Activated CD4-positive, alpha-beta T cell treated with anti-CD3 and anti-CD28 coated beads for 36 hours (primary cell): ENCODE measurements at regions of chr14 and their contacts with region 1.

Region 1: GRCh38 chr14:73825551-73826188 is 26.0 kb upstream of the PTGR2 start:
- DNase-seq: peak; percentile 91
- ATAC-seq: peak; percentile 79
- H3K4me3 Mint-ChIP-seq: no peak overlapping the region
- H3K27ac Mint-ChIP-seq: no peak overlapping the region
- H3K4me1 Mint-ChIP-seq: peaks cover 18% of the 10 kb centered on the region
- H3K27me3 Mint-ChIP-seq: no peaks in the 10 kb centered on the region

Region 2: DNA sequence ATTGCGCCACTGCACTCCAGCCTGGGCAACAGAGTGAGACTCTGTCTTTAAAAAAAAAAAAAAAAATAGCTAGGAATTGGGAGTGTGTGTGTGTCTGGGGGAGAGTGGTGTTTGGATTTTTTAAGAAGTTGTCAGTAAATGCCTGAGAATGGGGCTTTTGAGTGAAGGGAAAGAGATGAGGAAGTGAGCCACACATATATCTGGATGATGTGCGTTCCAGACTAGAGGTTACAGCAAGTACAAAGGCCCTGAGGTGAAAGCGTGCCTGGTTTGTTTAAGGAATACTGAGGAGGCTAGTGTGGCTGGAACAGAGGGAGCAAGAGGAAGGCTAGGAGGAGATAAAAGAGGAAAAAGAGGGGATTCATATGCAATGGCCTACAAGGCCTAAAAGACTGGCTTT is 518.4 kb before region 1 on chr14:
- CTCF ChIA-PET with region 1: no interaction called
- POLR2A ChIA-PET with region 1: no interaction called
- intact Hi-C with region 1: no loop called
- DNase-seq: no peak
- ATAC-seq: no peak
- H3K4me3 Mint-ChIP-seq: no peak overlapping the region
- H3K27ac Mint-ChIP-seq: no peak overlapping the region
- H3K4me1 Mint-ChIP-seq: peaks cover 8% of the 10 kb centered on the region
- H3K27me3 Mint-ChIP-seq: no peaks in the 10 kb centered on the region

Region 3: GRCh38 chr14:73503648-73504047 is 322.0 kb before region 1 on chr14:
- CTCF ChIA-PET with region 1: no interaction called
- POLR2A ChIA-PET with region 1: no interaction called
- intact Hi-C with region 1: loop called in 1 of 2 experiments (anchors 5 kb)
- DNase-seq: no peak
- ATAC-seq: no peak
- H3K4me3 Mint-ChIP-seq: no peak overlapping the region
- H3K27ac Mint-ChIP-seq: no peak overlapping the region
- H3K4me1 Mint-ChIP-seq: no peaks in the 10 kb centered on the region
- H3K27me3 Mint-ChIP-seq: no peaks in the 10 kb centered on the region

Region 4: GRCh38 chr14:73728717-73729330 is 96.8 kb before region 1 on chr14:
- CTCF ChIA-PET with region 1: interaction called, 170 read pairs
- POLR2A ChIA-PET with region 1: no interaction called
- intact Hi-C with region 1: loop called (anchors 1 kb)
- DNase-seq: peak; percentile 93
- ATAC-seq: peak; percentile 90
- H3K4me3 Mint-ChIP-seq: no peak overlapping the region
- H3K27ac Mint-ChIP-seq: peak overlapping the region; percentile 64
- H3K4me1 Mint-ChIP-seq: peaks cover 38% of the 10 kb centered on the region
- H3K27me3 Mint-ChIP-seq: no peaks in the 10 kb centered on the region

Region 5: GRCh38 chr14:73753959-73754882 is 71.4 kb before region 1 on chr14:
- CTCF ChIA-PET with region 1: interaction called, 21 read pairs
- POLR2A ChIA-PET with region 1: interaction called, 3 read pairs
- intact Hi-C with region 1: loop called (anchors 1 to 2 kb)
- DNase-seq: peak; percentile 80
- ATAC-seq: peak; percentile 45
- H3K4me3 Mint-ChIP-seq: peak overlapping the region; percentile 84
- H3K27ac Mint-ChIP-seq: peak overlapping the region; percentile 94
- H3K4me1 Mint-ChIP-seq: peaks cover 87% of the 10 kb centered on the region
- H3K27me3 Mint-ChIP-seq: no peaks in the 10 kb centered on the region

Region 6: DNA sequence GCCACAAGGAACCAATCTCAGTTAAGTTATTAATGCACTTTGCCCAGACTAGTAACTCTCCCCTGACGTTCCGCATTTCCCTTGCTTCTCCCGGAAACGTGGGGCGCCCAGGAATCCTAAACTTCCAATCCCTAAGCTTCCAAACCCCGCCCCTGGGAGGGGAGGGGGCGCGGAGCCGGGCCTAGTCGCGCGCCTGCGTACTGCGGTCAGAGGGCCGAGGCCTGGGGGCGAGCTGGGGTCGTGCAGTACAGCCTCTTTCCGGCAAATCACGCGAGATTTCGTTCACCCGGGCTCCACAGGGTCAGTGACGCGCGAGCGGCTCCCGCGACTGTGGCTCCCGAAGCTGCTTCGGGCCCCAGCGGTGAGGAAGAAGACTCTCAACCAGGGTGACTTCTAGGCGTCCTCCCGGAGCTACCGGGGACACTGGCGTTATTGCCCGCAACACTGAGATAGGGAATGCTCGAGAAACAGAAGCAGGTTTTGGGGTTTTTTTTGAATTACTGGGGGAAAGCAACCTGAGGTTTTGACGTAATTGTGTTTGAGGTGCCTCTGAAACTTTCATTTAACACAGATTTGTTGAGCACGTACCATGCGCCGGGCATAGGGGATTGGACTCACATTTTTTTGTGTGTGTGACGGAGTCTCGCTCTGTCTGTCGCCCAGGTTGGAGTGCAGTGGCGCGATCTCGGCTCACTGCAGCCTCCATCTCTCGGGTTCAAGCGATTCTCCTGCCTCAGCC is 26.1 kb after region 1 on chr14 and contains the start of gene PTGR2:
- CTCF ChIA-PET with region 1: interaction called, 5 read pairs
- POLR2A ChIA-PET with region 1: no interaction called
- intact Hi-C with region 1: loop called in 1 of 2 experiments (anchors 1 kb)
- DNase-seq: peak; percentile 94
- ATAC-seq: peak; percentile 94
- H3K4me3 Mint-ChIP-seq: peak within 1 kb of the TSS; percentile 98
- H3K27ac Mint-ChIP-seq: peak within 1 kb of the TSS; percentile 100
- H3K4me1 Mint-ChIP-seq: peaks cover 24% of the 10 kb centered on the region
- H3K27me3 Mint-ChIP-seq: no peaks in the 10 kb centered on the region
- total RNA-seq, gene PTGR2: 12.6 to 14.3 TPM

Region 7: GRCh38 chr14:74346341-74346740 is 520.7 kb after region 1 on chr14:
- CTCF ChIA-PET with region 1: no interaction called
- POLR2A ChIA-PET with region 1: no interaction called
- intact Hi-C with region 1: no loop called
- DNase-seq: no peak
- ATAC-seq: no peak
- H3K4me3 Mint-ChIP-seq: no peak overlapping the region
- H3K27ac Mint-ChIP-seq: no peak overlapping the region
- H3K4me1 Mint-ChIP-seq: no peaks in the 10 kb centered on the region
- H3K27me3 Mint-ChIP-seq: peaks cover 2% of the 10 kb centered on the region